Breast epithelium (tissue), 4 donors: ENCODE measurements at regions of chr20 and their contacts with region 1.

Region 1: DNA sequence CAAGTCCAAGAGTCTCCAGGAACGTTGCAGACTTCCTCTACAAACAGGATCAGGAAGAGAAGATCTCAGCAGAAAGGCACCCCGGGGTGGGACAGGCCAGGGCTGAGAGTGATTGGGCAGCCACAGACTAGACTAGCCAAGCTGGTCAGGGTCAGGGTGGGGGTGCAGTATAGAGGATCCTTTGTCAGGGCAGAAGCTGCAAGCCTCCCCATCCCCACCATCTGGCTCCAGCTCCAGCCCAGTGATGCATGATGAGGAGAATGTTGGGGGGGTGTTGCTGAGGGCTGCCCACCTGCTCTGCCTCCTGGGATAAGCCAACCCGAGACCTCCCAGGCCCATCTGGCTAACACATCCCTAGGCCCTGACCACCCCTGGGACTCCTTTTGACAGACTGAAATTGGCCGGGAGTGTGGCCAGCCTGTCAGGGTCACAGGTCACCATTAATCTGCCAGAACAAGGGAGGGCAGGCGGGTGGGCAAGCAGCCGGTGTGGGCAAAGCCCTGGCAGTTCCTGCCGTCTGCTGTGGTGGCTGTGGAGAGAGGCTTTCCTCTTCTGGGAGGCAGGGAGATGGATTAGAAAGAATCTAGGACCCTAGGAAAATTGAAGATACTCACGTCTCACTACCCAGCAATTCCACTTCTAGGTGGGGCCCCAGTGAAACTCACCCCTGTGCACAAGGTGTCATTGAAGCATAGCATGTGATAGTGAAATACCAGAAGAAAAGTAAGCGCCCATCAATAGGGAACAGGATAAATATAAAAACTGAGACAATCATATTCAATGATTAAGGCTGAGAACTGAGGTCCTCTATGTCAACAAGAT is 22.1 kb upstream of the SNTA1 start:
- DNase-seq: no peak
- H3K4me3 ChIP-seq: no peak overlapping the region
- H3K27ac ChIP-seq: no peak overlapping the region
- H3K4me1 ChIP-seq: no peaks in the 10 kb centered on the region
- H3K27me3 ChIP-seq: no peaks in the 10 kb centered on the region
- CTCF ChIP-seq: no peak
- POLR2A ChIP-seq: no peak

Region 2: DNA sequence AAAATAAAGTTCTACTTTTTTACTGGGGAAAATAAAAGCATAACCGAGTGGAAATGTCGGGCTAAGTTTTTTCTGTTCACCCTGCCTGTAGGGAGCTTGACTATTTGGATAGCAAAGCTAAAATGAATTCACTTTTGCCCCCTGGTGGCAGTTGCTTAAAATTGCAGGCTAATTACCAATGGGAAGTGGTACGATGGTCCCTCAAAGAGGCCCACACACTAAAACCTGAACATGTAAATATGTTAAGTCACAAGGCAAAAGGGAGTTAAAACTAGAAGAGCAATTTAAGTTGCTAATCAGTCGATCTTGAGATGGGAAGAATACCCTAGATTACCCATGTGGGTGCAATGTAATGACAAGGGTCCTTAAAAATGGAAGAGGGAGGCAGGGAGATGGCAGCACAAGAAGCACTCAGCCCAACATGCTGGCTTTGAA is 460.5 kb before region 1 on chr20:
- intact Hi-C with region 1: no loop called
- DNase-seq: no peak
- H3K4me3 ChIP-seq: no peak overlapping the region
- H3K27ac ChIP-seq: no peak overlapping the region
- H3K4me1 ChIP-seq: no peaks in the 10 kb centered on the region
- H3K27me3 ChIP-seq: no peaks in the 10 kb centered on the region
- CTCF ChIP-seq: no peak
- POLR2A ChIP-seq: no peak

Region 3: GRCh38 chr20:33423141-33423834 is 42.4 kb before region 1 on chr20:
- intact Hi-C with region 1: no loop called
- DNase-seq: no peak
- H3K4me3 ChIP-seq: no peak overlapping the region
- H3K27ac ChIP-seq: peak overlapping the region in 1 of 2 donors; percentile 53
- H3K4me1 ChIP-seq: no peaks in the 10 kb centered on the region
- H3K27me3 ChIP-seq: no peaks in the 10 kb centered on the region
- CTCF ChIP-seq: no peak
- POLR2A ChIP-seq: no peak

Region 4: DNA sequence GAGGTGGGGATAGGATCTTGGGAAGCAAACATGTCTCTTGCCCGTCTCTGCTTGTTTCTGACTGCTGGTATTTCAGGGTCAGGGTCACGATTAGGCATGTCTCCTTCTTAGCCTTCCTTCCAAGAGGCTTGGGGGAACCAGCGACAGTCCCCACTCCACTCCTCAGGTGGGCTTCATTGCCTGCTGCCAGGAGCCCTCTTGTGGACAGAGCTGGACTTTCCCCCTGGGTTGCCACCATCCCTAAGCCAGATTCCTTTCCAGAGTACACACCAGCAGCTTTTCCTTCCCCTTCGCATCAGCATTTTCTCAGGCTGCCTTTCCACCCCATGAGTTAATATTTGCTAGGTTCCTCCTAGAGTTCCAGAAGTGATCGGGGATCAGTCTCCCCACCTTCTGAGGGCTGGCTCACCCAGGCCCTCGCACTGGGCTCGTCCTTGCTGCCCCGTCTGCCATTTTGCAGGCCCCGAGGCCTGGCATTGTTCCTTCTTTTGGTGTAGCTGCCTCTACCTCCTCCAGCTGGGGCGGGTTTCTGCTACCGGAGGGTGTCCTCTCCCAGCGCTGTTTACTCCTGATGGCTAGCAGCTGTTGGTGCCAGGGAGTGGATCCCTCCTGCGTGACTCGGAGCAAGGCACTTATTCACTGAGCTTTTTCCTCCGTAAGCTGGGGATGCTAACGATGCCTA is 187.7 kb after region 1 on chr20:
- intact Hi-C with region 1: loop called (anchors 10 kb)
- DNase-seq: no peak
- H3K4me3 ChIP-seq: peak overlapping the region in 2 of 3 donors; percentile 20 to 46
- H3K27ac ChIP-seq: peak overlapping the region; percentile 50 to 58
- H3K4me1 ChIP-seq: peaks cover 0 to 5% of the 10 kb centered on the region in 2 donors
- H3K27me3 ChIP-seq: no peaks in the 10 kb centered on the region
- CTCF ChIP-seq: peak; percentile 34 to 80 (median 58)
- POLR2A ChIP-seq: no peak